Activated naive CD4-positive, alpha-beta T cell treated with anti-CD3 and anti-CD28 coated beads, Interleukin-2, amount 10 ng/mL, durations not matched to agents 7 days and 5 days (primary cell): ENCODE measurements at regions of chr13 and their contacts with region 1.

Region 1: GRCh38 chr13:95536632-95537241 is 15.8 kb upstream of the CLDN10 start:
- DNase-seq: no peak
- H3K4me3 Mint-ChIP-seq: no peak overlapping the region
- H3K27ac Mint-ChIP-seq: no peak overlapping the region
- H3K4me1 Mint-ChIP-seq: no peaks in the 10 kb centered on the region
- H3K27me3 Mint-ChIP-seq: peaks cover 17% of the 10 kb centered on the region

Region 2: GRCh38 chr13:95834134-95834765 is 297.5 kb after region 1 on chr13:
- CTCF ChIA-PET with region 1: interaction called, 45 read pairs
- DNase-seq: peak; percentile 71
- H3K4me3 Mint-ChIP-seq: no peak overlapping the region
- H3K27ac Mint-ChIP-seq: no peak overlapping the region
- H3K4me1 Mint-ChIP-seq: no peaks in the 10 kb centered on the region
- H3K27me3 Mint-ChIP-seq: peaks cover 4% of the 10 kb centered on the region